ENCODE measurements at regions of chr6 and their contacts with region 1.

Region 1: GRCh38 chr6:52407467-52407866 is 12.7 kb upstream of the EFHC1 start:
- DNase-seq: peak; percentile 79
- ATAC-seq: peak; percentile 64
- H3K4me3 ChIP-seq: no peak overlapping the region
- H3K27ac ChIP-seq: no peak overlapping the region
- H3K4me1 ChIP-seq: no peaks in the 10 kb centered on the region
- H3K27me3 ChIP-seq: no peaks in the 10 kb centered on the region
- CTCF ChIP-seq: peak; percentile 78

Region 2: DNA sequence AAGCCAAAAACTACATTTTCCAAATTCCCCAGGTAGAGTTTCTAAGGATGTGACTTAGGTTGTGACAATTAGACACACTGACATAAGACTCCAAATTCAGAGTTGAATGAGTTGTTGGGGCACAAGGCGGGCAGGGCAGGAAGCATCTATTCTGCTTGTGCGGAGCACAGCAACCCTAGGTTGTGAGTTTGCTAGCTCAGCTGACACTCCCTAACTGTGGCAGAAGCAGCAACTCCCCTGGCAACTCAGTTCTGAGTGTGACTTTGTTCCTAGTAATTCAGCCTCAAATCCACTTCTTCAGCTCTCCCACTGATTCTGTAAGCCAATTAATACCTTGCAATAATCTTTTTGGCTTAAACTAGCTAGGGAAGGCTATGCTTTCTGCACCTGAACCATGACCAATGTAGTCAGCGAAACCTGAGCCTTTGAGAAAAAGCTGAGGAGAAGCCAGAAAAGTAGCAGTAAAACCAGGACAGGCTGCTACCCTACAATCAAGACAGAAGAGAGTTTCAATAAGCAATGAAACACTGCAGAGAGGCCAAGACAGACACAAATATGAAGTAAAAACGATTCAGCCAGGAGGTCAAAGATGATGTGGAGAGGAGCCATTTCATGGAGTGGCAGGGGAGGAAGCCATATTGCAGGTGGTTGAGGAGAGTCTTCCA is 75.5 kb before region 1 on chr6:
- CTCF ChIA-PET with region 1: interaction called, 11 read pairs
- POLR2A ChIA-PET with region 1: no interaction called
- intact Hi-C with region 1: no loop called
- DNase-seq: no peak
- ATAC-seq: peak; percentile 60
- H3K4me3 ChIP-seq: no peak overlapping the region
- H3K27ac ChIP-seq: 0 out of 2 replicates have a peak overlapping the region, but pooled peaks have one; percentile 10
- H3K4me1 ChIP-seq: peaks cover 35% of the 10 kb centered on the region
- H3K27me3 ChIP-seq: no peaks in the 10 kb centered on the region
- CTCF ChIP-seq: no peak

Region 3: GRCh38 chr6:52389626-52390360 is 17.7 kb before region 1 on chr6:
- CTCF ChIA-PET with region 1: interaction called, 14 read pairs
- POLR2A ChIA-PET with region 1: no interaction called
- intact Hi-C with region 1: no loop called
- DNase-seq: peak; percentile 91
- ATAC-seq: peak; percentile 87
- H3K4me3 ChIP-seq: peak overlapping the region; percentile 53
- H3K27ac ChIP-seq: peak overlapping the region; percentile 81
- H3K4me1 ChIP-seq: peaks cover 32% of the 10 kb centered on the region
- H3K27me3 ChIP-seq: no peaks in the 10 kb centered on the region
- CTCF ChIP-seq: peak; percentile 38; the same call in 1 of the 2 replicates

Region 4: DNA sequence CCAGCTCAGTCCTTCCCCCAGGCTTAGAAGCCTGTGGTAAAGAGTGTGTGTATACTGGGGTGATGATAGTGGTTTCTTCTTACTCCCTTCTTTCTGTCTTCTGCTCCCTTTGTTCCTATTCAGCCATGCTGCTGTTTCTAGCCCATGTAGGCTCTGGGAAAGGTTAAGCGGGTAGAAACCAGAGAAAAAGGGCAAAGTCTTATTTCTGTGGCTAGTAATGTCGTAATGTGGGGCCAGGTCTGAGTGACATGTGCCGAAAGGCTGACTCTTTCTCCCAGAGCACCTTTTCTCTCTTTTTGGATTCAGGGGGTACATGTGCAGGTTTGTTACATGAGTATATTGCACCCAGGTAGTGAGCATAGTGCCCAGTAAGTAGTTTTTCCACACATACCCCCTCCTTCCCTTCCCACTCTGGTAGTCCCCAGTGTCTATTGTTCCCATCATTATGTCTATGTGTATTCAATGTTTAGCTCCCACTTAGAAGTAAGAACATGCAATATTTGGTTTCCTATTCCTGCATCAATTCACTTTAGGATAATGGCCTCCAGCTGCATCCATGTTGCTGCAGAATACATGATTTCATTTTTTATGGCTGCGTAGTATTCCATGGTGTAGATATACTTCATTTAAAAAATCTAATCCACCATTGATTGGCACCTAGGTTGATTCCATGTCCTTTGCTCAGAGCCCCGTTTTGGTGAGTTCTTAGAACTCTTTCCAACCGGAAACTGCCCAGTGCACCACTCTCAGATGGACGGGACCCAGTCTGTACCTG is 87.0 kb after region 1 on chr6:
- CTCF ChIA-PET with region 1: interaction called, 13 read pairs
- POLR2A ChIA-PET with region 1: no interaction called
- intact Hi-C with region 1: no loop called
- DNase-seq: no peak
- ATAC-seq: no peak
- H3K4me3 ChIP-seq: no peak overlapping the region
- H3K27ac ChIP-seq: no peak overlapping the region
- H3K4me1 ChIP-seq: no peaks in the 10 kb centered on the region
- H3K27me3 ChIP-seq: no peaks in the 10 kb centered on the region
- CTCF ChIP-seq: no peak

Region 5: GRCh38 chr6:52598123-52598823 is 190.8 kb after region 1 on chr6:
- CTCF ChIA-PET with region 1: interaction called, 10 read pairs
- POLR2A ChIA-PET with region 1: no interaction called
- intact Hi-C with region 1: no loop called
- DNase-seq: peak; percentile 21
- ATAC-seq: peak; percentile 33; the same call in 1 of the 2 replicates
- H3K4me3 ChIP-seq: no peak overlapping the region
- H3K27ac ChIP-seq: no peak overlapping the region
- H3K4me1 ChIP-seq: peaks cover 9% of the 10 kb centered on the region; the same call in 1 of the 2 replicates
- H3K27me3 ChIP-seq: no peaks in the 10 kb centered on the region
- CTCF ChIP-seq: peak; percentile 72

Region 6: DNA sequence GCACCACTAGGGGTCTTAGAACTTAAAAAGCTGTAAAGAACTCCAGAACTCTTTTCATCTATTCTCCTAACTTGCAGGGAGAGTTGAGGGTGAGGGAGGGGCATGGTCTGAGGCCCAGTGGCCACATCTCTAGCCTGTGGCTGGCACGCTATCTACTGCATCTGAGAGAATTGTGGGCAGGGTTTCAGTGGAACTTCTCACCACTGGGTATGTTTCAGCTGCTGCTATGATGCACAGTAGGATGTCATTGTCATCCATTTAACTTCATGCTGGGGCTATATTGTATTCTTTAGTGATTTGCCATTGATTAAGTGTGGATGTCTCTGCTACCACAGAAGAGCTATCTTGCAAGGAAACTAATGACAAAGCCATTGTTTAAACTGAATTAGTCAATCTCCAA is 267.9 kb after region 1 on chr6:
- CTCF ChIA-PET with region 1: interaction called, 14 read pairs
- POLR2A ChIA-PET with region 1: no interaction called
- intact Hi-C with region 1: no loop called
- DNase-seq: no peak
- ATAC-seq: no peak
- H3K4me3 ChIP-seq: no peak overlapping the region
- H3K27ac ChIP-seq: no peak overlapping the region
- H3K4me1 ChIP-seq: peaks cover 26% of the 10 kb centered on the region
- H3K27me3 ChIP-seq: no peaks in the 10 kb centered on the region
- CTCF ChIP-seq: no peak

Region 7: DNA sequence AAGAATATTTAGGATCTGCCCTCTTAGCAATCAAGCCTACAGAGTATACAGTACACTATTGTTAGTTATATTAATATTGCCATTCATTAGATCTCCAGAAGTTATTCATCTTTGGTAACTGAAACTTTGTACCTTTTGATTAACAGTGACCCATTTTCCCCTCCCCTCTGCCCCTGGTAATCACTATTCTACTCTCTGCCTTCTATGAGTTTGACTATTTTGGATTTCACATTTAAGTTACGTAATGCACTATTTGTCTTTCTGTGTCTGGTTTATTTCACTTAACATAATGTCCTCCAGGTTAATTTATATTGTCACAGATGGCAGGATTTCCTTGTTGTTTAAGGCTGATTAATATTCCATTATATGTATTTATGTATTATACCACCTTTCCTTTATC is 1814.8 kb after region 1 on chr6:
- CTCF ChIA-PET with region 1: interaction called, 11 read pairs
- POLR2A ChIA-PET with region 1: no interaction called
- intact Hi-C with region 1: no loop called
- DNase-seq: no peak
- ATAC-seq: no peak
- H3K4me3 ChIP-seq: no peak overlapping the region
- H3K27ac ChIP-seq: no peak overlapping the region
- H3K4me1 ChIP-seq: no peaks in the 10 kb centered on the region
- H3K27me3 ChIP-seq: no peaks in the 10 kb centered on the region
- CTCF ChIP-seq: no peak

Measured in PC-3 (cell line).